Colonic mucosa (tissue), 4 donors: ENCODE measurements at regions of chr11 and their contacts with region 1.

Region 1: GRCh38 chr11:129853518-129854236 is 38.0 kb downstream of the TMEM45B start:
- DNase-seq: peak; percentile 88
- H3K4me3 ChIP-seq: no peak overlapping the region
- H3K27ac ChIP-seq: peak overlapping the region; percentile 75
- H3K4me1 ChIP-seq: peaks cover 4% of the 10 kb centered on the region
- H3K27me3 ChIP-seq: no peaks in the 10 kb centered on the region
- CTCF ChIP-seq: no peak

Region 2: GRCh38 chr11:129785383-129786111 is 68.1 kb before region 1 on chr11:
- intact Hi-C with region 1: loop called (anchors 10 kb)
- DNase-seq: no peak
- H3K4me3 ChIP-seq: no peak overlapping the region
- H3K27ac ChIP-seq: no peak overlapping the region
- H3K4me1 ChIP-seq: no peaks in the 10 kb centered on the region
- H3K27me3 ChIP-seq: no peaks in the 10 kb centered on the region
- CTCF ChIP-seq: peak; percentile 25

Region 3: GRCh38 chr11:129803533-129803932 is 50.1 kb before region 1 on chr11:
- intact Hi-C with region 1: no loop called
- DNase-seq: peak; percentile 85
- H3K4me3 ChIP-seq: no peak overlapping the region
- H3K27ac ChIP-seq: peak overlapping the region; percentile 58
- H3K4me1 ChIP-seq: no peaks in the 10 kb centered on the region
- H3K27me3 ChIP-seq: no peaks in the 10 kb centered on the region
- CTCF ChIP-seq: no peak